Activated CD4-positive, alpha-beta T cell treated with anti-CD3 and anti-CD28 coated beads for 36 hours (primary cell): ENCODE measurements at regions of chr11 and their contacts with region 1.

Region 1: GRCh38 chr11:64916775-64917662 is at the start of gene ATG2A:
- DNase-seq: peak; percentile 99
- ATAC-seq: peak; percentile 99
- H3K4me3 Mint-ChIP-seq: peak within 1 kb of the TSS; percentile 90
- H3K27ac Mint-ChIP-seq: peak within 1 kb of the TSS; percentile 88
- H3K4me1 Mint-ChIP-seq: peaks cover 16% of the 10 kb centered on the region
- H3K27me3 Mint-ChIP-seq: no peaks in the 10 kb centered on the region
- total RNA-seq, gene ATG2A: 15.8 to 16.7 TPM

Region 2: DNA sequence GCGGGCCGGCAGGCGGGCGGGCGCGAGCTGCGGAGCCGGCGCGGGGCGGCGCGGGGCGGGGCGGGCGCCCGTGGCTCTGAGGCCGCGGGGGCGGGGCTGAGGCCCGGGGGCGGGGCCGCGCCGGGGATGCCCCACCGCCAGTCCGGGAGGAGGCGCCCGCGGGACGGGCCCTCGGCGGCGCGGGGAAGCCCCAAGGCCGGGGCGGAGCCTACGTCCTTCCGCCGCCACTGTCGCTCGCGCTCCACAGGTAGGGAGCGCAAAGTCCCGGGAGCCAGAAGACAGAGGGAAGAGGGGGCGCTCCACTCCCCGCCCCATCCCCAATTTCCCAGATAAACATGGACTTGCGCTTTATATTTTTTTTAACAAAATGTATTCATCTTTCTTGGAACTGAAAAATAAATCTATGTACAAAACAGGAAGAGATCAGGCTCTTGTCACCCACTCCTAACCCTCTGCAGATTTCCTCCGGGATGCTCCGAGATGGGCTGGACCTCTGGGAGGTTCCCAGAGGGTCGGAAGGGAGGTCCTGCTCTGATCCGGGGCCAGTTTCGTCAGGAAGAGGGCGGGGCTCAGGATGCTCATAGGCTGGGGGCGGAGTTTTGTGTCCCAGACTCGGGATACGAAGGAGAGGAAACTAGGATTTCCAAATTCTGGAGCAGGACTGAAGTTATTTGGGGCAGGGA is 113.7 kb before region 1 on chr11 and contains the start of gene MAP4K2:
- CTCF ChIA-PET with region 1: interaction called, 3 read pairs
- POLR2A ChIA-PET with region 1: no interaction called
- intact Hi-C with region 1: loop called in 1 of 2 experiments (anchors 1 kb)
- DNase-seq: peak; percentile 92
- ATAC-seq: peak; percentile 93
- H3K4me3 Mint-ChIP-seq: peak within 1 kb of the TSS; percentile 75
- H3K27ac Mint-ChIP-seq: peak within 1 kb of the TSS; percentile 90
- H3K4me1 Mint-ChIP-seq: peaks cover 27% of the 10 kb centered on the region
- H3K27me3 Mint-ChIP-seq: no peaks in the 10 kb centered on the region
- total RNA-seq, gene MAP4K2: 54.0 to 57.3 TPM

Region 3: DNA sequence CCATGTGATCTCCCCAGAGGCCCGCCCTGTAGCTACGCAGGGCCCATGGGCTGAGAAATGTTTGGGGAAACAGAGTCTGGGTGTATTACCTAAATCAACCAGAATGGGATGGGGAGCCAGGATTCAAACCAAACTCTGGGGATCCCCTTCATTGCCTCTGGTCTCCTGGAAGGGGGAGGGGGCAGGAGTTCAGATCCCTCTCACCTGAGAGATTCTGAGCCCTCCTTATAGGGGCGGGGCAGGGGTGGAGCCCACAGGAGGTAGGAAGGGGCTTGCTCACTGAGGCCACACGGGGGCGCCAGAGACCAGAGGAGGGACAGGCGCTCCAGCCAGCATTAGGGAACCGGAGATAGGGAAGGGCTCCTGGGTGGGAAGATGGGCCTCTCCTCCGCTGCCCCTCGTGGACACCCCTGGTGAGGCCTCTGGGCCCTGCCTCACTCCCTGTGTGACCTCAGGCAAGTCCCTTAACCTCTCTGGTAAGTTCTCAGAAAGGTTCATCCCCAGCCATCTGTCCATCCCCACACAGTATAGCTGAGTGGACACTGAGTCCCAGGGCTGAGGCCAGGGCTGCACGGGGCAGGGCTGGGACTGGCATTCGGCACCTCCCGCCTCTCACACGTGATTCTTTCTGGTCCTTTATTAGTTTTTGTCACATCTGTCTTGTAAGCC is 69.9 kb before region 1 on chr11:
- CTCF ChIA-PET with region 1: interaction called, 4 read pairs
- POLR2A ChIA-PET with region 1: no interaction called
- intact Hi-C with region 1: loop called in 1 of 2 experiments (anchors 1 kb)
- DNase-seq: peak; percentile 96
- ATAC-seq: peak; percentile 75
- H3K4me3 Mint-ChIP-seq: no peak overlapping the region
- H3K27ac Mint-ChIP-seq: no peak overlapping the region
- H3K4me1 Mint-ChIP-seq: peaks cover 54% of the 10 kb centered on the region
- H3K27me3 Mint-ChIP-seq: no peaks in the 10 kb centered on the region

Region 4: GRCh38 chr11:65013692-65014145 is 96.7 kb after region 1 on chr11:
- CTCF ChIA-PET with region 1: interaction called, 3 read pairs
- POLR2A ChIA-PET with region 1: no interaction called
- intact Hi-C with region 1: loop called (anchors 1 to 5 kb)
- DNase-seq: peak; percentile 90
- ATAC-seq: peak; percentile 87
- H3K4me3 Mint-ChIP-seq: peak overlapping the region; percentile 83
- H3K27ac Mint-ChIP-seq: peak overlapping the region; percentile 96
- H3K4me1 Mint-ChIP-seq: peaks cover 25% of the 10 kb centered on the region
- H3K27me3 Mint-ChIP-seq: no peaks in the 10 kb centered on the region

Region 5: DNA sequence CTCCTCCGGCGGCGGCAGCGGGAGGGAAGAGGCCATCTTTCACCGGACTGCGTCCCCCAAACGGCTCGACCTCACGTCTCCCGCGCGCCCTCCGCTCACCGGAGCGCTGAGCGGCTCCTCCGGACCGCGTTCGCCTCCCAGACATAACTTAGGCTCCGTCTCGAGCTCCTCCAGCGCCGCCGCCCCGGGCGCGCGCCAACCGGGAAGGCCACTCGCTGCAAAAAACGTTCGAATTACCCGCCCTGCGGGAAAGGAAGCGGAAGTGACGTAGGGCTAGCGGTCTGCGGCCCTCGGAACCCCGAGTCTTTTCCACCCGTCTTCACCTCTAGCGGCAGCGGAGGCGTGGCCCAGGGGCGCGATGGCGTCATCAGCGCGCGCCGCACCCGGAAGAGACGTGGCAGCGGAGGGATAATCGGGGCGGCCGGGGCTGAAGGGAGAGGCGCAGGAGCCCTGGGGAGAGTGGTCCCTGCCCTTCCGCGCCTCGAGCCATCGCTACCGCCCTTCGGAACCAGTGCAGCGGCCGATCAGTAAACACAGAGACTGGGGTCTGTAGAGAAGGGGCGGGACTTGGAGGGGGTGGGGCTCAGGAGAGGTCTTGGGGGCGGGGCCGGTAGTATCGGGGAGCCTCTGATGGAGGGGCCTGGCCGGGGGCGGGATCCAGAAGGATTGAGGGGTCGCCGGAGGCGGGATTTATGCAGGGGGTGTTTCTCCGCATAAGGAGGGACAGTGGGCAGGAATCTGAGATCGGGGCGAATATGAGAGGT is 167.0 kb after region 1 on chr11 and contains the starts of genes CDCA5 and ZFPL1:
- CTCF ChIA-PET with region 1: no interaction called
- POLR2A ChIA-PET with region 1: no interaction called
- intact Hi-C with region 1: loop called in 1 of 2 experiments (anchors 1 kb)
- DNase-seq: peak; percentile 97
- ATAC-seq: peak; percentile 81
- H3K4me3 Mint-ChIP-seq: peak within 1 kb of the TSS; percentile 99
- H3K27ac Mint-ChIP-seq: peak within 1 kb of the TSS; percentile 98
- H3K4me1 Mint-ChIP-seq: peaks cover 41% of the 10 kb centered on the region
- H3K27me3 Mint-ChIP-seq: no peaks in the 10 kb centered on the region
- total RNA-seq, gene CDCA5: 111 to 119 TPM
- total RNA-seq, gene ZFPL1: 24.2 to 31.8 TPM

Region 6: GRCh38 chr11:65111744-65112414 is 194.9 kb after region 1 on chr11 and contains the start of gene TM7SF2:
- CTCF ChIA-PET with region 1: no interaction called
- POLR2A ChIA-PET with region 1: no interaction called
- intact Hi-C with region 1: loop called (anchors 1 to 5 kb)
- DNase-seq: peak; percentile 98
- ATAC-seq: peak; percentile 78
- H3K4me3 Mint-ChIP-seq: peak within 1 kb of the TSS; percentile 83
- H3K27ac Mint-ChIP-seq: peak within 1 kb of the TSS; percentile 74
- H3K4me1 Mint-ChIP-seq: peaks cover 50% of the 10 kb centered on the region
- H3K27me3 Mint-ChIP-seq: no peaks in the 10 kb centered on the region
- total RNA-seq, gene TM7SF2: 17.4 to 18.1 TPM

Region 7: GRCh38 chr11:65134386-65135253 is 217.6 kb after region 1 on chr11 and contains the start of gene SYVN1:
- CTCF ChIA-PET with region 1: no interaction called
- POLR2A ChIA-PET with region 1: no interaction called
- intact Hi-C with region 1: loop called in 1 of 2 experiments (anchors 1 kb)
- DNase-seq: peak; percentile 95
- ATAC-seq: peak; percentile 91
- H3K4me3 Mint-ChIP-seq: peak within 1 kb of the TSS; percentile 97
- H3K27ac Mint-ChIP-seq: peak within 1 kb of the TSS; percentile 97
- H3K4me1 Mint-ChIP-seq: peaks cover 27% of the 10 kb centered on the region
- H3K27me3 Mint-ChIP-seq: no peaks in the 10 kb centered on the region
- total RNA-seq, gene SYVN1: 24.3 to 31.1 TPM